Activated naive CD4-positive, alpha-beta T cell treated with anti-CD3 and anti-CD28 coated beads, Interleukin-2, amount 10 ng/mL, durations not matched to agents 7 days and 5 days (primary cell): ENCODE measurements at regions of chr5 and their contacts with region 1.

Region 1: DNA sequence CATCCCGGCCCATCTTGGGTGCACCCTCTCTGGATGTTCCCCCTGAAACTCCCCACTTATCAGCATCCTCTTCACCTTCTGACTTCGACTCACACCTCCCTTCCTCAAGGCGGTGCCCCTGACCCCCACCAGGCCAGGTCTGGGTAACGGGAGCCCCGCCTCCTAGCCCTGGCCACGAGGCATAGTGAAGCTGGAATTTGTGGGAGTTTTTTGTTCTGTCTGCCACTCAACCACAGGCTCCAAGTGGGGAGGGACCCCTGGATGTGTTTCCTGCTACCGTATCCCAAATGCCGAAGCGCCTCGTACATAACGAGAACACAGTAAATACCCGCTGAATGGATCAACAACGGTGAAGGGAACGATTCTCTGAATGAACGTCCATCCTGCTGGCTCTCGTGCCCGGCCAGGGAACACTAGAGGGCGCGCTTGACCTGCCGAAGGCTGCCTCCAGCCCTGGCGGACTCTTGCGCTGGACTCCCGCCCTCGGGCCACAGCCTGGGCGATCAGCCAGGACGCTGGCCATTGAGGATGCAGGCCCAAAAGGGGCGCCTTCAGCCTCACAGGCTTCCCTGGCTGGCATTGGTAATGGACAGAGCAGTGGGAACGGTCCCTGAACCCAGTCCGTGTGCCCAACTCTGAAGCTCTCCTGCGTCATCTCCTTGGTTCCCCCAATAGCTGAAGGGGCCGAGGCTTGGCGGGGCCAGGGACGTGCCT is 47.3 kb upstream of the PHYKPL start:
- DNase-seq: peak; percentile 74
- H3K4me3 Mint-ChIP-seq: no peak overlapping the region
- H3K27ac Mint-ChIP-seq: no peak overlapping the region
- H3K4me1 Mint-ChIP-seq: peaks cover 7% of the 10 kb centered on the region
- H3K27me3 Mint-ChIP-seq: peaks cover 51% of the 10 kb centered on the region

Region 2: GRCh38 chr5:178234750-178235587 is 44.9 kb before region 1 on chr5:
- CTCF ChIA-PET with region 1: interaction called, 11 read pairs
- DNase-seq: peak; percentile 88
- H3K4me3 Mint-ChIP-seq: no peak overlapping the region
- H3K27ac Mint-ChIP-seq: peak overlapping the region; percentile 62
- H3K4me1 Mint-ChIP-seq: peaks cover 84% of the 10 kb centered on the region
- H3K27me3 Mint-ChIP-seq: no peaks in the 10 kb centered on the region

Region 3: DNA sequence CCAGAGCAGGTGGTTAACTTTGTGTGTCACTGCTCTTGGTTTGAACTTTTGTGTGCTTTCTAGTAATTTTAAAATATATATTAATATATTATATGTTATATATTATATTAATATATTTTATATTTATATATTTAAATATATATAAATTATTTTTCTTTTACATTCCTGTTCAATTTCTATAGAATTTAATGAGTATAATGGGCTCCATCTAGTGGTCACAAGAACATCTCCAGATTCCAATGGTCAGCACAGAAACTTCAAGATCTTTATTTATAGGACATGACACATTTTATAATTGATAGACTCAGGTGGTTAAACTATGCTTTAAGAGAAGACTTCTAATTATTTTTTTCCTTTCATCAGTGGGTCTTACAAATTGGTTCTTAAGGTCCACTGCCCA is 271.2 kb after region 1 on chr5:
- CTCF ChIA-PET with region 1: interaction called, 15 read pairs
- DNase-seq: no peak
- H3K4me3 Mint-ChIP-seq: no peak overlapping the region
- H3K27ac Mint-ChIP-seq: no peak overlapping the region
- H3K4me1 Mint-ChIP-seq: no peaks in the 10 kb centered on the region
- H3K27me3 Mint-ChIP-seq: peaks cover 4% of the 10 kb centered on the region